ENCODE measurements at regions of chr12 and their contacts with region 1.

Region 1: DNA sequence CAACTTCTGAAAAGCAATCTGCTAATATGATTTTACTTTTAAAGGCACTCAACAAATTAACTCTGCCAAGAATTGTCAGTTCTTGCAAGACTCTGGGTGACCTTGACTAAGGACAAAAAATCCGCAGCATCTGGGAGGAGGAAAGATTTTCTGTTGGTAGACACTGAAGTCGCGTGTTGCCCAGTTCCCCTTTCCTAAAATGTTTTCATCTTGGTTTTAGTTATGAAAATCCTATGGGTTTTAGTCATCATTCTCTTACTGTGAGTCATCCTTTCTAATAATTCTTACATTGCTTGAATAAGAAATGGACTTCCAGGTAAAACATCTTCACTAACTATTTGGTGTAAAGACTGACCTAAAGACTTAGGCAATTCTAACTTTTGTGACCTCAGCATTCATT is 9.1 kb downstream of the GSG1 start:
- DNase-seq: peak; percentile 30 to 88
- H3K4me3 ChIP-seq: no peak overlapping the region
- H3K27ac ChIP-seq: peak overlapping the region; percentile 80
- H3K4me1 ChIP-seq: peaks cover 67% of the 10 kb centered on the region
- H3K27me3 ChIP-seq: no peaks in the 10 kb centered on the region
- CTCF ChIP-seq: no peak

Region 2: GRCh38 chr12:12813120-12814101 is 280.9 kb before region 1 on chr12 and contains the start of gene DDX47:
- CTCF ChIA-PET with region 1: no interaction called
- POLR2A ChIA-PET with region 1: no interaction called
- intact Hi-C with region 1: loop called (anchors 1 kb)
- DNase-seq: peak; percentile 81 to 98
- H3K4me3 ChIP-seq: peak within 1 kb of the TSS; percentile 67
- H3K27ac ChIP-seq: peak within 1 kb of the TSS; percentile 81
- H3K4me1 ChIP-seq: peaks cover 64% of the 10 kb centered on the region
- H3K27me3 ChIP-seq: no peaks in the 10 kb centered on the region
- CTCF ChIP-seq: peak; percentile 93
- total RNA-seq, gene DDX47: 192 and 196 TPM in 2 replicates

Region 3: GRCh38 chr12:12999959-13000615 is 94.3 kb before region 1 on chr12 and contains the start of gene HEBP1:
- CTCF ChIA-PET with region 1: interaction called, 5 read pairs
- POLR2A ChIA-PET with region 1: no interaction called
- intact Hi-C with region 1: loop called (anchors 1 kb)
- DNase-seq: peak; percentile 64 to 98
- H3K4me3 ChIP-seq: peak within 1 kb of the TSS; percentile 99
- H3K27ac ChIP-seq: peak within 1 kb of the TSS; percentile 85
- H3K4me1 ChIP-seq: peaks cover 18% of the 10 kb centered on the region
- H3K27me3 ChIP-seq: no peaks in the 10 kb centered on the region
- CTCF ChIP-seq: no peak; the same call in 1 of the 2 replicates
- total RNA-seq, gene HEBP1: 148 and 195 TPM in 2 replicates

Region 4: DNA sequence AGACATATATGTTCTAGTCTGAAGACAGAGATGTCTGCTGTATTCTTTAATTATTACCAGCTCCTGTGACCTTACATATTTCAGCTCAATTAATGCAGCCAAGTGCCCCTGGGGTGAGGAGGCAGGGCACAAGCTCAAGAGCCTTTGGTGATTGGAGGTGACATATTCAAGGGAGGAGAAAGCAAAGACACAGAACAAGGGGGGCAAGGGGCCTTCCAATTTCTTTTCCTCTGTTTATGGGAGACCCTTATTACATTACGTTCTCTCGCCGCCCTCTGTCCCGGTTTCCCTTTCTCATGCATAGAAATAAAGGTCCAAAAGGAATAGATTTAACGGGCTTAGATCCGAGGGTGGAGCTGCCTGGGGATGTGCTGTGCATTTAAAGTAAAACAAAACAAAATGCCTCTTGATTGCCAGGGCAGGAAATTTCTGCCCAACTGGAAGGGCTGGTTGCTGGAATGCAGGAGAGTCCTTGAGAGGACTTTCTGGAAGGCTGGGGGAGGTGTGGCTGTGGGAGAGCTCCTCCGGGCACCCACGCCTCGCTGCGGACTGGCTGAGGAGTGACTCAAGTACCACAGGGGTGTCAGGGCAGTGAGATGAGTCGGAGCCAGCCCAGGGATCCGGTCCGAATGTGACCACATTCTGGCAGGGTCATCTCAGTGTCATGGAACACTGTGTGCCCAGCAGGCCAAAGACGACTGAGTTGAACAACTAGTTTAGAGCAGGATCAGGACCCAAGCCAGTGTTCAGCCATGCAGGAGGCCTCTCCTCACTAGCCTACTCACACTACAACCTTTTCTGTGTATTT is 41.2 kb after region 1 on chr12:
- CTCF ChIA-PET with region 1: interaction called, 12 read pairs
- POLR2A ChIA-PET with region 1: interaction called, 37 read pairs
- intact Hi-C with region 1: loop called (anchors 1 kb)
- DNase-seq: peak; percentile 99
- H3K4me3 ChIP-seq: peak overlapping the region; percentile 39; the same call in 1 of the 2 replicates
- H3K27ac ChIP-seq: peak overlapping the region; percentile 88
- H3K4me1 ChIP-seq: peaks cover 50% of the 10 kb centered on the region
- H3K27me3 ChIP-seq: no peaks in the 10 kb centered on the region
- CTCF ChIP-seq: peak; percentile 32; the same call in 1 of the 2 replicates

Region 5: GRCh38 chr12:13179211-13180074 is 85.1 kb after region 1 on chr12:
- CTCF ChIA-PET with region 1: interaction called, 7 read pairs
- POLR2A ChIA-PET with region 1: interaction called, 15 read pairs
- intact Hi-C with region 1: loop called (anchors 1 kb)
- DNase-seq: peak; percentile 94 to 95
- H3K4me3 ChIP-seq: peak overlapping the region; percentile 39; the same call in 1 of the 2 replicates
- H3K27ac ChIP-seq: peak overlapping the region; percentile 95
- H3K4me1 ChIP-seq: peaks cover 89% of the 10 kb centered on the region
- H3K27me3 ChIP-seq: no peaks in the 10 kb centered on the region
- CTCF ChIP-seq: no peak

Region 6: DNA sequence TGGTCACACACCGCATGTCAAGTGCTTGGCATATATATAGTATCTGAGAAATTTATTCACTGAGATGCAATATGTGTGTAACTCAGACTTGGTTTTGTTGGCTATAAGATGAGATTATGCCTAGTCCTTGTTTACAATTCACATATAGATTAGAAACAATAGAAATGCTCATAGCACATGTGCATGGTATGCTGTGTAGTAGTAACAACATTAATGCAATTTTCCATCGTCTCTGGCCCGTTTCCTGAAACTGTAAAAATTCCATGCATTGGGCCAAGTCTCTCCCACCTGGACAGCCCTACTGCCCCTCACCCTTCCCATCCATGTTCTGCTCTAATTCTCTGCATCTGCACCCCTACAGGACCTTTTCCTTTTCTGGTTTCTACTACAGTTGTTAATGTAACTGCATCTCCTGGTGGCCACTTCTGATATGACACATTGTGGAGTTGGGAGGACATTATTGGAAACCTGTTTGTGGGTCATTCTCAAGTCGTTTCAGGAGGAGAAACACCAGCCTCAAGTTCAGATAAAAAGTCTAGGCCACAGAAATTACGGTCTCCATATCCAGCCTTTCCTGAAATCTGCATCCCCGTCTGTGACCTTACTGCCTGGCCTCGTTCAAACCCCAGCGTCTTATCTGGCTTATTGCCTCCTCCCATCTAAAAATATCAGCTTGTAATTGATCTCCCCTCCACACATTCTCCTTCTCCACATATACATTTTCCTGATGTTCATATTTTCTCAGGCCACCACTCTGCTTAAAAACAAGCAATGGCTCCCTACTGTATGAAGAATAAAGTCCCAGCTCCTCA is 139.7 kb after region 1 on chr12:
- CTCF ChIA-PET with region 1: no interaction called
- POLR2A ChIA-PET with region 1: interaction called, 3 read pairs
- intact Hi-C with region 1: loop called (anchors 1 kb)
- DNase-seq: peak in 1 of 2 experiments; percentile 62
- H3K4me3 ChIP-seq: no peak overlapping the region
- H3K27ac ChIP-seq: no peak overlapping the region
- H3K4me1 ChIP-seq: peaks cover 8% of the 10 kb centered on the region; the same call in 1 of the 2 replicates
- H3K27me3 ChIP-seq: no peaks in the 10 kb centered on the region
- CTCF ChIP-seq: peak; percentile 96

Measured in PC-9 (cell line).